ENCODE measurements at regions of chr17 and their contacts with region 1.

Region 1: DNA sequence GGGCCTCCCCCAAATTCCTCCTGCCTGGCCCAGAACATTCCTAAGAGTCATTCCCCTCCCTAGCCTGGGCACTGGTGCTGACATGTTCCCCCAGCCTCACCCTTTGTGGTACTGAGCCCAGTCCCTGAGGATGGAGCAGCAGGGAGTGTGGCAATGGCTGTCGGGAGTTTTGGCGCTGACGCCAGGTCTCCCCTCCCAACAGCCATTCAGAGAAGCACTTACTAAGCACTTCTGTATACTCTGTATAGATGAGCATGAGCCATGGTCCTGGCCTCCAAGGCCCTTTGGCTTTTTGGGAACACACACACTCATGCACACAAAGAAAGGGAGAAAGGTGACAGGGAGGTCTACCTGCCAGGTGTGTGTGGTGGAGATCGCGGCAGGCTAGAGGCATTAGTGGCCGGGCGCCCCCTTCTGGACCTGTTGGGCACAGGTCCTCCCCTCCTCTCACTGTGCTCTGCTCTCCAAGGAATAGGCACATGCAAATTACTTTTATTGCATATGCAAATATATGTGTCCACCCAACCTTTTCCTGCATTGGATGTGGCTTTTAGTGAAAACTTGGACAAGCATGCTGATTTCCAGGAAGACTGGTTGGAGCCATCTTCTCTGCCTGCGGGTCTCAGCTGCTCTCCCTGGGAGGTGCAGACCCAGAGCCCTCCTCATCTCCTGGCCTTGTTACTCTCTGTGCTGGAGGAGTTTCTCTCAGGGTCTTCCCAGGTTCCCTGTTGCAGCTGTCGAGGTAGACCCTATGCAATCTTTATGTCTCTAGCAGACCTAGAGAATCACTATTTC is 17.4 kb upstream of the C17orf107 start:
- DNase-seq: peak; percentile 58
- H3K4me3 ChIP-seq: no peak overlapping the region
- H3K27ac ChIP-seq: no peak overlapping the region
- H3K4me1 ChIP-seq: peaks cover 7% of the 10 kb centered on the region
- H3K27me3 ChIP-seq: no peaks in the 10 kb centered on the region
- CTCF ChIP-seq: peak; percentile 88

Region 2: DNA sequence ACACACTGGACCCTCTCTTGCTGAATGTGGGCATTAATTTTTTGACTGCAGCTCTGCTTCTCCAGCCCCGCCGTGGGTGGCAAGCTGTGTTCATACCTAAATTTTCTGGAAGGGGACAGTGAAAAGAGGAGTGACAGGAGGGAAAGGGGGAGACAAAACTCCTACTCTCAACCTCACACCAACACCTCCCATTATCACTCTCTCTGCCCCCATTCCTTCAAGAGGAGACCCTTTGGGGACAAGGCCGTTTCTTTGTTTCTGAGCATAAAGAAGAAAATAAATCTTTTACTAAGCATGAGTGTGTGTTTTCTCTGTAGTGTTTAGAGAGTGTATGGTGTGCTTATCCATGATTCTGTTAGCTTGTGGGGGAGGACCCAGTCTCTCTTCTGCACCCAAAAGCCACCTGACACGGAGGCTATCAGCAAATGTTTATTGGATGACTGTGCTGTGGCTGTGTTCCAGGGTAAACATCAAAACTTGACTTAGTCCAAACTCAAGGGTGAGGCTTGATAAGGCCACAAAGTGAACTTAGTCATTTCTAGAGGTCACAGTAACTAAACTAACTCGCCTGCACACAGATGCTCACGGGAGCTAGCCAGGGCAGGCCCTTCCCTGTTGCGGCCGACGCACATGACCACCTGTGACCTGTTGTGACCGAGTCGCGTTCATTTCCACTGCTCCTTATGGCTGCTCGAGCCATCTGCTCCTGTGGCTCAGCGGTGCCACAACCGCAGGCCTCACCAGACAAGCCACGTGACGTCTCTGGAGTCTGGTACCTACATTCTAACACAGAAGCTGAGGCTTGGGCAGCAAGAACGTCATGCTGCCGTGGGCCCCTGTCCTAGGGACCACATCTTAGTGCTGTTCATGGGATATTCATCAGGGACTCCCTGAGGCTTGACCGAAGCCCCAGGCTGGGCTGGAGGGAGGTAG is 160.5 kb before region 1 on chr17:
- intact Hi-C with region 1: no loop called
- DNase-seq: peak; percentile 45
- H3K4me3 ChIP-seq: no peak overlapping the region
- H3K27ac ChIP-seq: peak overlapping the region; percentile 80
- H3K4me1 ChIP-seq: peaks cover 24% of the 10 kb centered on the region
- H3K27me3 ChIP-seq: no peaks in the 10 kb centered on the region
- CTCF ChIP-seq: no peak

Region 3: DNA sequence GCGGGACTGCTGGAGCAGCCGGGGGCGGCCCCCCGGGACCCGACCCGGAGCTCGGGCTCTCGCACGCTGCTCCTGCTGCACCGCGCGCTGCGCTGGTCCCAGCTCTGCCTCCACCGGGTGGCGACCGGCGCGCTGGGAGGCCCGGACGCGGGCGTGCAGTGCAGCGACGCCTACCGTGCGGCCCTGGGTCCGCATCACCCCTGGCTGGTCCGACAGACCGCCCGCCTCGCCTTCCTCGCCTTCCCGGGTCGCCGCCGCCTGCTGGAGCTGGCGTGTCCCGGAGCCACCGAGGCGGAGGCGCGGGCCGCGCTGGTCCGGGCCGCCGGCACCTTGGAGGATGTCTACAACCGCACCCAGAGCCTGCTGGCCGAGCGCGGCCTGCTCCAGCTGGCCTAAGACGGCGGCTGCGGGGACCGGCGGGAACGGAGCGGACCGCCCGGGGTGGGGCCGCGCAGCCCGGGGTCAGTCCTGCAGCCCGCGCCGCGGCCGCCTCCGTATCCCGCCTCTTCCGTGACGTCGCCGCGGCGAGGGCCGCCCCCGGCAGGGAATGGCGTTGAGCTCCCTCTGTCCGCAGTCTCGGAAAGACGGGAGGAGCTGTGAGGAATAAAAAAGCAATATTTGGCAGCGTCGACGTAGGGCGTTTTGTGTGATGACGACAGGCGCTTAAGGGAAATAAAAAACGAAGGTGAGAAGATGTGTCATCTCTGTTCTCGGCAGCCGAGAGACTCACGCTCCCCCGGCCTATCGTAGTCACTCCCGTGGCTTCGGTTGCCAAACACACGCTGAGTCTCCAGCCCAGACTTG is 91.9 kb before region 1 on chr17:
- intact Hi-C with region 1: loop called (anchors 5 kb)
- DNase-seq: peak; percentile 87
- H3K4me3 ChIP-seq: peak overlapping the region; percentile 90
- H3K27ac ChIP-seq: peak overlapping the region; percentile 100
- H3K4me1 ChIP-seq: peaks cover 54% of the 10 kb centered on the region
- H3K27me3 ChIP-seq: peaks cover 14% of the 10 kb centered on the region
- CTCF ChIP-seq: peak; percentile 85

Region 4: DNA sequence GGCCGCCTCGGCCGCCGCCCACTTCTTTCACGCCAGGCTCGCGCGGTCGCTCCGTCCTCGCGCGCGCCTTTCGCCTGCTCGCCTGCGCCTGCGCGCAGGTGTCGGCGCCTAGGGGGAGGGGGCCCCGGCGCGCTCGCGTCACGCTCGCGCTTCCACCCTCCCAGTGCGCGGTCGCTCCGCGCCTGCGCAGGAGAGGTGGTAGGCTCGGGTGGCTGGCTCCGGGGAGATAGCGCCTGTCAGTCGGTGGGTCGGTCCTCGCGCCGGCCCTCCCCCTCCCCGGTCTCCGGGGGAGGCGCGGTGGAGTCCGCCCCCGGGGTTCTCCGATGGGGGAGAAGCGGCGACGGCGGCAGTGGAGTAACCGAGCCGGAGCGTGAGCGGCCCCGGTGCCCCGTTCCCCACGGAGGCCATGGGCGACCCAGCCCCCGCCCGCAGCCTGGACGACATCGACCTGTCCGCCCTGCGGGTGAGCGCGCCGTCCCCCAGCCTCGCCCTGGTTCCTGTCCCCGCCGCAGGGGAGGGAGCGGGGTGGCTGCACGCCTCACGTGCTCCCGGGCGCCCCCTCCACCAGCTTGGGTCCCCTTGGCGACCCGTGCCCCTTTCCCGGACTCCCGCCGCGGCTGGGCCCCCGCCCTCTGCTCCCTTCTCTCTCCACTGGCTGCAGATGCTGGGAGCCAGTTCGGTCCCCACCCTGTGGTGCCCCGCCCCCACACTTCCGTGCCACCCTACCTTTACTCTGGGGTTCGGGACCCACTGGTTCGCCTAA is 48.6 kb before region 1 on chr17 and contains the start of gene MINK1:
- intact Hi-C with region 1: loop called (anchors 10 kb)
- DNase-seq: peak; percentile 87
- H3K4me3 ChIP-seq: peak within 1 kb of the TSS; percentile 93
- H3K27ac ChIP-seq: peak within 1 kb of the TSS; percentile 95
- H3K4me1 ChIP-seq: peaks cover 52% of the 10 kb centered on the region
- H3K27me3 ChIP-seq: no peaks in the 10 kb centered on the region
- CTCF ChIP-seq: no peak
- total RNA-seq, gene MINK1: 50.9 TPM

Region 5: GRCh38 chr17:4966844-4967538 is 85.0 kb after region 1 on chr17:
- intact Hi-C with region 1: no loop called
- DNase-seq: peak; percentile 98
- H3K4me3 ChIP-seq: peak overlapping the region; percentile 90
- H3K27ac ChIP-seq: peak overlapping the region; percentile 98
- H3K4me1 ChIP-seq: peaks cover 45% of the 10 kb centered on the region
- H3K27me3 ChIP-seq: no peaks in the 10 kb centered on the region
- CTCF ChIP-seq: no peak

Measured in left ventricle myocardium inferior (tissue), 1 donor.